GM18951 (cell line): ENCODE measurements at regions of chr15 and their contacts with region 1.

Region 1: DNA sequence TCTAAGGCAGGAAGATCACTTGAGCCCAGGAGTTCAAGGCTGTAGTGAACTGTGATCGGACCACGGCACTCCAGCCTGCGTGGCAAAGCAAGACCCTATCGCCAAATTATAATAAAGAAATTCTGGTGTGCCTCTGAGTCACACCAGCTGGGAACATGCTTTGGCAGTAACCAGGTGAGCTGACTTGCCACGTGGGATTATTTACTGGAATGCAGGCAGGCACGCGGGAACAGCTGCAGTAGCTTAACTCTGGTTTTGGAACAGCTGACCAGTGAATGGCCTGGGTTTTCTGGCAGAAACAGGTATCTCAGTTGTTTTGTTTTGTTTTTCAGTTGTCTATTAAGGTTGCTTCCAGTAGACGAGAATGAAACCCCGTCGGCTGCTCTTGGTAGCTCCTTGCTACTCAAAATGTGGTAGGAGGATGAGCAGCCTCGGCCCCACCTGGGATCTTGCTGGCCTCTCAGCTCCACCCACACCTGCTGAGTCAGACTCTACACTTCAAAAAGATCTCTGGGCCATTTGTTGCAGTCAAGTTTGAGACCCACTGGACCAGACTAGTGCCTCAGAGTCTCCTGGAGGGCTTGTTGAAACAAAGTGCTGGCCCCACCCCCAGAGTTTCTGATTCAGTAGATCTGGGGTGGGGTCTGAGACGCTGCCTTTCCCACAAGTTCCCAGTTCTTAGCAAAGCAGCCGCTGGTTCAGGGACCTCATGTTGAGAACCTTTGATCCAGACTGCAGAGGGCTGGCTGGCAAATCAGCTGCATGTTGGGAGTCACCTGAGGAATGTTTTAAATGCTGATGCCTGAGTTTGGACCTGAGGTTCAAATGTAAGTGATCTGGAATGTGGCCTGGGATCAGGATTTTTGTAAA is 26.6 kb downstream of the IDH2 start:
- POLR2A ChIP-seq: no peak

Region 2: GRCh38 chr15:89898614-89899294 is 176.9 kb before region 1 on chr15:
- in situ Hi-C with region 1: loop called (anchors 5 kb)
- POLR2A ChIP-seq: no peak

Region 3: DNA sequence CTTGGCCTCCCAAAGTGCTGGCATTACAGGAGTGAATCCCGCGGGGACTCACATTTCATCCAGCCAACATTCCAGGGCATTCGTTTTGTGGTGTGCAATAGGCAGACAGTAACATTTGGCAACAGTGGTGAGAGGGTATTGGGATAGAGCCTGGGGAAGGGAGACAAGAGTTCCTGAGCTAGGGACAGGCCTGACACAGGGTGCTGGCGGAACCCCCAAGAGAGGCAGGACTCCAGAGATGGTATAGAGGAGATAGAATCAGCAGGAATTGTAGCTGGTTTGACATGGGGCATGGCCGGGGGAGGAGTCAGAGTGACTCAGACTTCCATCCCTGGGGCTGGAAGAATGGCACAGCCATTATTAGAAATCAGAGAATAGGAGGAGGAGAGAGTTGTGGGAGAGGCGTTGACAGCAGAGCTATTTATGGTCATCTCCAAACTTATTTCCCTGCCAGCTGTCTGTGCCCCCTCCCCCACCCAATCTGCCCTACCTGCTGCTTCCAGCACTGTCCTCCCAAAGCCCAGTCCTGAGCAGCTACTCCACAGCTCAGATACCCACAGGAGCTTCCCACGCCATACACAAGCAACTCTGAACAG is 31.0 kb after region 1 on chr15:
- in situ Hi-C with region 1: no loop called
- POLR2A ChIP-seq: no peak

Region 4: GRCh38 chr15:90412356-90413194 is 336.9 kb after region 1 on chr15:
- in situ Hi-C with region 1: no loop called
- POLR2A ChIP-seq: no peak